Right cardiac atrium (tissue), 5 donors: ENCODE measurements at regions of chr1 and their contacts with region 1.

Region 1: DNA sequence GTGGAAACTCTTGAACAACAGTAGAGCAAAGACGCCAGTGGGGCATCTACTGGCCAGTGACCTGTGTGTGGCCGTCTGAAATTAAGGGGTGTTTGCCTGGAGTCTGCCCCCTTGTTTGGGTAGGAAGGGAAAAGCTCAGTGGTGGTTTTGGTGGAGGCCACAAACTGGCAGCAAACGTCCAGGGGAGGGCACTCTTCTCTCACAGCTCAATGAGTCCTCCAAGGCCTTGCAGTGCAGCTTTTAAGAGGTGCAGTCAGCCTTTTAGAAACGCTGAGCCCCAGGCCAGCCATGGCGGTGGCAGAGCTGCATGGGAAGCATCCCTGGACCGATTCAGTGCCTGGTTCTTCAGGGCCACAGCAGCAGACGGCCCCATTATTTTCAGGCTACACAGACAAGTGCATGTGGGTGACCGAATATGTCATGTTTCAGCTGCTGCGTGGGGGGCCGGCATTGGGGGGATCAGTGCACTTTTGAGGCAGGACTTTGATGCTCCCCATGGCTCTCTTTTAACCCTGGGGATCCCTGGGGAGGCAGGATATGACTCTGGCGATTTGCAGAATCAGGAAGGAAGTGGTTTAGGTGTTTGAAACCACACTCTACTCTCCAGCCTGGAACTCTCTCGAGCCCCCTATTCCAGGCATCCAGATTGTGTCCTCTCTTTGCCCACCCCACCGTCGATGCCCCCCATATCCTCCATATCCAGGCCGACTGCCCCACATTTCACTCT is 414.0 kb downstream of the PRDM2 start:
- DNase-seq: peak; percentile 20 to 65 (median 52)
- ATAC-seq: peak; percentile 57 to 67
- H3K4me3 ChIP-seq: no peak overlapping the region
- H3K27ac ChIP-seq: no peak overlapping the region
- H3K4me1 ChIP-seq: peaks cover 1% of the 10 kb centered on the region
- H3K27me3 ChIP-seq: no peaks in the 10 kb centered on the region

Region 2: DNA sequence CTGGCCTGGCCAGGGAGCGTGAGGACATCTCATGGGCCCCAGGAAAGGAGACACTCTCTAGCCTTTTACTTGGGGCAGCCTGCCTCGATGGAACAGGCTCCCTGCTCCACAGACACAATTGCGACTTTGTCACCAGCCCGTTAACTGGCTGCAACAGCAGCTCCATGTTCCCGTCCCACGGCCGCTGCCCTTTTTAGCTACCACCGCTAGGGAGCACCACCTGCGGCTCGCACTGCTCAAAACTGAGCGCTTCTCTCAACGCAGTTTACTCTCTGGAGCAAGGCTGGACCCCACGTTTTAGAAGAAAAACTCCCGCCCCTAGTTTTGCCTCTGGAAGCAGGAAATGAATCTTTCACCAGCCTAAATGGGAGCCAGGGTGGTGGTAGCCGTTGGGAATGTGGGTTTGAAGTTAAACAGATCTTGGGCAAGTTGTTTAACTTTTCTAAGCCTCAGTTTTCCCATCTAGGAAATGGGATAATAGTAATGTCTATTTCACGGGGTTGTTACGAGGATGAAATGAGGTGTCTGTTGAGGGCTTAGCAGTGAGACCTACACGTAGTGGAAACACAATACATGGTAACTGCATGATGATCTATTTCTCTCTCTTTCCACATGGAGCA is 596.7 kb before region 1 on chr1:
- intact Hi-C with region 1: no loop called
- DNase-seq: peak in 1 of 3 donors; percentile 60
- ATAC-seq: no peak
- H3K4me3 ChIP-seq: no peak overlapping the region
- H3K27ac ChIP-seq: no peak overlapping the region
- H3K4me1 ChIP-seq: no peaks in the 10 kb centered on the region
- H3K27me3 ChIP-seq: no peaks in the 10 kb centered on the region

Region 3: DNA sequence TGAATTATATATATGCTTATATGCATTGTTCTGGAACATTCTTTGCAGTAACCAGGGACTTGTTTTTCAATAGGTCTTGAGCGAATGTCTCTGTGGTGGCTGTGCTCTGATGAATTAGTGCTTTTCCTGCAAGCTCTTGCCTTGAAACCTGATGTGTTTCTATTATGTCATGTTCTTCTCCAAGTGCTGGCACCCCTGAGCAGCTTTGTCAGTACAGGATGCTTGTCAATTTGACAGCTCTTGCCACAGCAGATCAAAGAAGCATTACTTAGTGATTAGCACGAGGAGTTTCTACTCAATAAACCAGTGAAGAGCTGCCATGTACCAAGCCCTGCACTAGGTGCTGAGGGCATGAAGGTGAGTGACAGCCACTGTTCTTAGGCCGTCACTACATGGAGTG is 242.1 kb before region 1 on chr1:
- intact Hi-C with region 1: no loop called
- DNase-seq: no peak
- ATAC-seq: no peak
- H3K4me3 ChIP-seq: no peak overlapping the region
- H3K27ac ChIP-seq: no peak overlapping the region
- H3K4me1 ChIP-seq: no peaks in the 10 kb centered on the region
- H3K27me3 ChIP-seq: no peaks in the 10 kb centered on the region

Region 4: DNA sequence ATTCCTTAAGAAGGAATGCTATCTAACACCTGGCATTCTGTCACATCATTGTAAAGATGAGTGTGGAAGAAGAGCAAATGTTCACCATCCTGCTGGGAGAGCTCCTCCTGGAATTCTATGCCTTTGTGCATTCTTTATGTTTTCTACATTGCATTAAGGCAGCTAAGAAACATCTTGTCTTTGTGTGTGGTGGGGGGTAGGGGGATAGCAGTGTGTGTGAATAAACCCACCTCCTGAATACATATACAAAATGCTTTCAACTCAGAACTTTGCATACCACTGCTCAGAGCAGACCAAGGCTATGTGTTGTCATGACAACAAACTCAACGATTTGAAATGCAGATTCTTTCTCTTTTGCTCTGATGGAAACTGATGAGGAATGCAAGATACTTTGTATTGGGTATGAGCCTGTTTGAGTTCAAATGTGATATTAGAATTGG is 290.9 kb after region 1 on chr1:
- intact Hi-C with region 1: no loop called
- DNase-seq: no peak
- ATAC-seq: no peak
- H3K4me3 ChIP-seq: no peak overlapping the region
- H3K27ac ChIP-seq: no peak overlapping the region
- H3K4me1 ChIP-seq: no peaks in the 10 kb centered on the region
- H3K27me3 ChIP-seq: no peaks in the 10 kb centered on the region

Region 5: DNA sequence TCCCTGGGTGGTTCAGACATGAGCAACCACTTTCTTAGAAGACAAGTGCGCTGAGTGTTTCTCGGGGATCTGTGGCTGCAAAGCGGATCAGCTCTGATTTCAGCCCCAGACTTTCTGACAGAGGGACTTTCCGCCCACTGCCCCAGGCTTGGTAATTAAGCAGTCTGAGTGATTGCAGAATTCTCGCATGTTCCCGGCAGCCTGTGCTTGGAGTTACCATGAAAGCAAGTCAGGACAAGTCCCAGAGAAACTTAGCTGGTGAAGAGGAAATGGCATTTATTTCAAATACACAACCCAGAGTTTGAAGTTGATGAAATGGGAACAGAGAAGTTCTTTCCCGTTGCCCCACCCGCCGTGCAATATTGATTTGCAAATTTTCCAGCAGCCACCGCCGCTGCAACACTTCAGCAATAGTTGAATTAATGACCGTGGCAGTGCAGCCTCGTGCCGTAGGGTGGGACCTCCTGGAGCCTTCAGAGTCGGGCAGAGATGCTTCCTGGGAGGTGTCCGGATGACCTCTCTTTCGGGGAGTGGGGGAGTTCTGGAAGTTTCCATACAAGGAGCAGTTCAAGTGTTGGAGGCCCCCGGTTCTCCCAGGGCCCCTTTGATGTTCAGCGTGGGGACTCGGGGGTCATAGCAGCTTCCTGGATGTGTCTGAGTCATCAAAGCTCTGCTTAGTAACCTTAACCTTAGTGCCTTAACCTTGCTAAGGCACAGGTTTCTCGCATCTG is 619.2 kb after region 1 on chr1:
- intact Hi-C with region 1: loop called in 2 of 4 experiments (anchors 5 kb)
- DNase-seq: no peak
- ATAC-seq: no peak
- H3K4me3 ChIP-seq: no peak overlapping the region
- H3K27ac ChIP-seq: no peak overlapping the region
- H3K4me1 ChIP-seq: no peaks in the 10 kb centered on the region
- H3K27me3 ChIP-seq: no peaks in the 10 kb centered on the region

Region 6: DNA sequence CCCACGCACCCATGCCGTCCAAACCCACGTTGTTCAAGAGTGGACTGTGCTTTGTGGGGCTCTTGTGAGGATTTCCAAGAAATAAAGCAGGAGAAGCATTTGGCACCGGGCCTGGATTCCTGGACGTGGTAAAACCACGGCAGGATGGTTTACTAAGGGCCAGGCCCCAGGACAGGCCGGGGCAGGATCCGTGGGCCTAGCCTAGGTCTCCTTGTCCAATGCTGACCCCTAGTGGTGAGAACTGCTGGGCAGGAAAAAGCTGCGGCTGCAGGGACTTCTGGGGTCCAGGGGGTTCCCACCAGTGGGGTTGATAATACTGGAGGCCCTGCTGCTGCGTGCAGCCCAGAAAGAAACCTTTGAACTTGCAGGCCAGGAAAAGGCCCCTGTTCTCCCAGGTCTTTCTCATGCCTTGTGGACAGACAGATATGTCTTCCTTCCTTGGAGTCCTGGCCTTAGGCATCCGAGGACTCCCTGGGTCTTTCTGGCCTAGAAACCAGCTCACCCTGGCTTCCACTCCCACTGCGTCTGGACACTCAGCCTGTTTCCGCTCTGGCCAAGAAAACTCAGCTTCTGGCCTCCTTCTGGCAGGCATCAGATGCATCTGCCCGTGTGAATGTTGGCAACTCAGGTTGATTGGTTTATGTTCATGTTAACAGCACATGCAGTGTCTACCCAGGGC is 932.6 kb after region 1 on chr1:
- intact Hi-C with region 1: loop called in 3 of 4 experiments (anchors 5 to 10 kb)
- DNase-seq: peak; percentile 74 to 86 (median 82)
- ATAC-seq: peak; percentile 63 to 77
- H3K4me3 ChIP-seq: no peak overlapping the region
- H3K27ac ChIP-seq: no peak overlapping the region
- H3K4me1 ChIP-seq: no peaks in the 10 kb centered on the region
- H3K27me3 ChIP-seq: no peaks in the 10 kb centered on the region